ENCODE measurements at regions of chr13 and their contacts with region 1.

Region 1: GRCh38 chr13:23159230-23159759 is 21.5 kb upstream of the SGCG start:
- DNase-seq: peak in 4 of 10 donors; percentile 23 to 62 (median 47)
- H3K4me3 ChIP-seq: peak overlapping the region in 52 of 59 donors; percentile 6 to 65 (median 44)
- H3K27ac ChIP-seq: no peak overlapping the region
- H3K27me3 ChIP-seq: peaks cover 0 to 46% (median 17%) of the 10 kb centered on the region in 45 donors
- CTCF ChIP-seq: peak in 53 of 56 donors; percentile 25 to 64 (median 53)

Region 2: GRCh38 chr13:22517544-22517943 is 641.8 kb before region 1 on chr13:
- intact Hi-C with region 1: no loop called
- DNase-seq: no peak
- H3K4me3 ChIP-seq: no peak overlapping the region
- H3K27ac ChIP-seq: no peak overlapping the region
- H3K27me3 ChIP-seq: no peaks in the 10 kb centered on the region
- CTCF ChIP-seq: no peak

Region 3: GRCh38 chr13:22801402-22802003 is 357.8 kb before region 1 on chr13:
- intact Hi-C with region 1: loop called in 1 of 2 experiments (anchors 10 kb)
- DNase-seq: no peak
- H3K4me3 ChIP-seq: no peak overlapping the region
- H3K27ac ChIP-seq: no peak overlapping the region
- H3K27me3 ChIP-seq: peaks cover 0 to 10% (median 0%) of the 10 kb centered on the region in 45 donors
- CTCF ChIP-seq: peak in 54 of 56 donors; percentile 23 to 78 (median 51)

Region 4: GRCh38 chr13:23069566-23069965 is 89.7 kb before region 1 on chr13:
- intact Hi-C with region 1: no loop called
- DNase-seq: no peak
- H3K4me3 ChIP-seq: no peak overlapping the region
- H3K27ac ChIP-seq: no peak overlapping the region
- H3K27me3 ChIP-seq: no peaks in the 10 kb centered on the region
- CTCF ChIP-seq: no peak

Region 5: DNA sequence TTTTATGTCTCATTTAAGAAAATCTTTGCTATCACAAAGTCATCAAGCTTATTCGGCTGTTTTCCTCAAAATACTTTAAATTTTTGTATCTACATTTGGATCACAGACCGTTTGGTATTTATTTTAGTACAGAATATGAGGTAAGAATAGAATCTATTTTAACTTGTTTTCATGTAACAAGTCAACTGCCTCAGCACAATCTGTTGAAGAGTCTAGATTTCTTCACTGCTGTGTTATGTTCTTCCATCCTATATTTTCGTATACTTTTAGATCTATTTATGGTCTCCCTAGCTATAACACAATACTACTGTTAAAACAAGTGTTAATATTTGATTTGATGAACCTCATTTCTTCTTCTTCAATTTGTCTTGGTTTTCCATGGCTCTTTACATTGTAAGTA is 40.2 kb before region 1 on chr13:
- intact Hi-C with region 1: no loop called
- DNase-seq: no peak
- H3K4me3 ChIP-seq: no peak overlapping the region
- H3K27ac ChIP-seq: peak overlapping the region in 5 of 59 donors; percentile 0 to 36 (median 20)
- H3K27me3 ChIP-seq: no peaks in the 10 kb centered on the region
- CTCF ChIP-seq: no peak

Region 6: GRCh38 chr13:23243066-23243465 is 83.8 kb after region 1 on chr13:
- intact Hi-C with region 1: no loop called
- DNase-seq: no peak
- H3K4me3 ChIP-seq: no peak overlapping the region
- H3K27ac ChIP-seq: no peak overlapping the region
- H3K27me3 ChIP-seq: no peaks in the 10 kb centered on the region
- CTCF ChIP-seq: no peak

Measured in dorsolateral prefrontal cortex (tissue), 120 donors.